ENCODE measurements at regions of chr17 and their contacts with region 1.

Region 1: GRCh38 chr17:2883567-2884101 is 87.4 kb downstream of the RAP1GAP2 start:
- DNase-seq: no peak
- ATAC-seq: no peak
- H3K4me3 ChIP-seq: no peak overlapping the region
- H3K4me3 Mint-ChIP-seq: no peak overlapping the region
- H3K27ac ChIP-seq: no peak overlapping the region
- H3K27ac Mint-ChIP-seq: no peak overlapping the region
- H3K4me1 ChIP-seq: peaks cover 0 to 20% of the 10 kb centered on the region in 2 experiments
- H3K4me1 Mint-ChIP-seq: peaks cover 16 to 25% (median 18%) of the 10 kb centered on the region in 3 donors
- H3K27me3 ChIP-seq: no peaks in the 10 kb centered on the region
- H3K27me3 Mint-ChIP-seq: no peaks in the 10 kb centered on the region

Region 2: DNA sequence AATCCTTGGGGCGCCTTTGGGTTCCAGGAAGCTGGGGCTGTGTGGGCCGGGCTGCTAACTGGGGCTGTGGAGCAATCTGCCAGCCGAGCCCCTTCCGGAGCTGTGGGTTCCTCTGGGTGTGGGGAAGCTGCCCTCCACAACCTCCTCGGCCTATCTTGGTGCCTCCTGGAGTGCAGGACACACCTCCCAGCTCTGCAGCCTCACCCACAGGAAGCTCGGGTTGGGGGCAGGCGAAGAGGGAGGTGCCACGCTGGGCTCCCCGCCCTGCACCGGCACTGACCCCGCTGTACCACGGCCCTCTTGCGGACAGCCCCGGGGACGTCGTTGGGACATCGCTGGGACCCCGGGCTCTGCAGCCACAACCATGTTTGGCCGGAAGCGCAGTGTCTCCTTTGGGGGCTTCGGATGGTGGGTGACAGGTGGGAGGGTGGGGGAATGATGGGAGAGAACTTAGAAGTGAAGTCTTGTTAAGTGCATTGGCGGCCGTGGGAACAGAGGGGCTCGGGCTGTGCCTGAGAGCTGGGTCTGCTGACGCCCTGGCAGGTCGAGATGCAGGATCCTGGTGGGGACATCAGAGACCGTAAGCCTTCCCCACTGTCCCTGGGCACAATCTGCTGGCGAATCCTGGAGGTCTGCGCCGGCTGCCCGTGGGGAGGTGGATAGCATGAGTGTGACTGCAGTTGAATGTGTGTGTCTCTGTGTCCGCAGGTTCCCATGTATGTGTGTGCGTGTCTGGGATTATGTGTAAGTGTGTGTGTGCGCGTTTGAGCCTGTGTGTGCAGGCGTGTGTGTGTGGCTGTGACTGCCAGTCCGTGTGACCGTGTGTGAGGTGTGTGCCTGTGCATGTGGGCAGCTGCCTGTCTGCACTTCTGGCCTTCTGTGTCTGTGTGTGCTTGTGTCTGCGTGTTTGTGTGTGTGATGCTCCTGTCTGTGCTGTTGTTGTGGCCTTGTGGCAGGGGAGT is 87.2 kb before region 1 on chr17 and contains the start of gene RAP1GAP2:
- CTCF ChIA-PET with region 1: no interaction called
- POLR2A ChIA-PET with region 1: interaction called in 1 of 2 experiments, 11 read pairs
- DNase-seq: peak in 34 of 35 experiments; percentile 51 to 86 (median 78)
- ATAC-seq: peak; percentile 86 to 91 (median 89)
- H3K4me3 ChIP-seq: peak within 1 kb of the TSS; percentile 79 to 85
- H3K4me3 Mint-ChIP-seq: peak within 1 kb of the TSS; percentile 76 to 90 (median 81)
- H3K27ac ChIP-seq: no peak within 1 kb of the TSS
- H3K27ac Mint-ChIP-seq: peak within 1 kb of the TSS; percentile 71 to 84
- H3K4me1 ChIP-seq: peaks cover 34 to 90% of the 10 kb centered on the region in 2 experiments
- H3K4me1 Mint-ChIP-seq: peaks cover 78 to 88% (median 82%) of the 10 kb centered on the region in 3 donors
- H3K27me3 ChIP-seq: peaks cover 0 to 6% of the 10 kb centered on the region in 2 experiments
- H3K27me3 Mint-ChIP-seq: no peaks in the 10 kb centered on the region
- total RNA-seq, gene RAP1GAP2: 8.0 to 77.7 (median 13.3) TPM